ENCODE measurements at regions of chr7 and their contacts with region 1.

Region 1: DNA sequence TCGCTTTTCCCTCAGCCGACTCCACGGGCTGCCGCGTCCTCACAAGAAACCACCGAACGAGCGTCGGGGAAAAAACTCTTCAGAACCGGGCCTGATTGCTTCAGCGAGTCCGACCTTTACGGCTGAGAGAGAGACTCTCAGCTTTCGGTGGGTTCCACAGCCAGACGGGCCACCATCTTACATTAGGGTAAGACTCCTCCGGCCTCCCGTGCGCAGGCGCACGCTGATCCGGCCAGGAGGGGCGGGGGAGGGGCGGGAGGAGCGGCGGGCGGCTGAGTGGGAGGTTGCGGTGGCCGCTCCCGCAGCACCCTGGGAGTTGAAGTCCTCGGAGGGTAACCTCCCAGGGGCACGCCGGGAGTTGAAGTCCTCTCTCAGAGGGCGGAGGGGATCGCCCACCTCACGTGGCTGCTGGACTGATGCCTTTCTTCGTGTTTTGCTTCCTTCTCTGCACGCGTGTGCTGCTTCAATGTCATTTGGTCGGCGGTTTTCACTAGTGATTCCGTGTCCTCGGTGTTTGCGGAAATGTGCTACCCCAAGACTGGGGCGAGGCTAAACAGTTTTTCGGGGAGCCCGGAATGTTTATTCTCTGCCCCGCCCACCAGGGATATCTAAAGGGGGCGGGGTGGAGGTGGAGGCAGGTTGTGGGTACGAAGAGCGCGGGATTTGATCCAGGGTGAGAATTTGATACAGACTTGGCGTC is at the start of gene CNOT4:
- DNase-seq: peak; percentile 87 to 98
- ATAC-seq: peak; percentile 91 to 98 (median 94)
- H3K4me3 ChIP-seq: peak within 1 kb of the TSS; percentile 88
- H3K4me3 Mint-ChIP-seq: no peak within 1 kb of the TSS
- H3K27ac ChIP-seq: peak within 1 kb of the TSS; percentile 95
- H3K27ac Mint-ChIP-seq: no peak within 1 kb of the TSS
- H3K4me1 ChIP-seq: peaks cover 12% of the 10 kb centered on the region
- H3K4me1 Mint-ChIP-seq: peaks cover 6 to 8% of the 10 kb centered on the region in 2 donors
- H3K27me3 ChIP-seq: no peaks in the 10 kb centered on the region
- H3K27me3 Mint-ChIP-seq: no peaks in the 10 kb centered on the region
- CTCF ChIP-seq: no peak
- total RNA-seq, gene CNOT4: 40.6 to 47.1 (median 40.7) TPM

Region 2: DNA sequence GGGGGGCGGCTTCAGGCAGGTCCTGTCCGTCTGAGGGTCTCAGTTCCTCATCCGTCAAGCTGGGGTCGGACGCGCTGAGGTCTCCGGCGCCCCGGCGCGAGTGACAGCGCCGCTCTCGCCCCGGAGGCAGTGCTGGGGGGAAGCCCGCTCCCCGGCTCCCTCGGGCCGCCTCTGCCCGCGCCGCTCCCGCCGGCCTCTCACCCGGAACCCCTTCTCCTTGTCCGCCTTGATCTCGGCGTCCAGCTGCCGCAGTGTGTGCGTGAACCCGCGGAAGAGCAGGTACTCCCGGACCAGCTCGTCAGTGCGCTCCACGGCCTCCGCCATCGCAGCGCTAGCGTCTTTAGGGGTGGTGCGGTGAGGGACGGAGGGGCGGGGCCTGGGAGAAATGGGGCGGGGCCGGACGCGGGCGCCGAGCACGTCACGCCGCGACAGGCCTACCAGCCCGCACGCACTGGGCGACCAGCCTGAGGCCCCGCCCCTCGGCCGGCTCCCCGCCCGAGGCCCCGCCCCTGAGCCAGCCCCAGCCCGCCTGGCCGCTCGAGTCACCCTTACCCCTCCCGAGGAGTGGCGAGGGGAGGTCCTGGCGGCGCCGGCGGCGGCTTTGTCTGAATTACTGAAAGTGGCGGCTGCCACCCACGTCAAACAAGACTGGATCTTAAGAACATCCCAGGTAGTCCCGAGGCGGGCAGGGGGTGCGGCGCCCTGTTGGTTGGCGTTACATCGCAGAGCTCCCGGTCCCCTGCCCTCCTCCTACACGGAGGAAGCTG is 298.7 kb before region 1 on chr7 and contains the start of gene WDR91:
- intact Hi-C with region 1: loop called (anchors 5 kb)
- DNase-seq: peak; percentile 89 to 97
- ATAC-seq: peak; percentile 93 to 99 (median 94)
- H3K4me3 ChIP-seq: peak within 1 kb of the TSS; percentile 88
- H3K4me3 Mint-ChIP-seq: peak within 1 kb of the TSS; percentile 99
- H3K27ac ChIP-seq: peak within 1 kb of the TSS; percentile 87
- H3K27ac Mint-ChIP-seq: peak within 1 kb of the TSS; percentile 91 to 95
- H3K4me1 ChIP-seq: peaks cover 26% of the 10 kb centered on the region
- H3K4me1 Mint-ChIP-seq: peaks cover 17 to 35% of the 10 kb centered on the region in 2 donors
- H3K27me3 ChIP-seq: no peaks in the 10 kb centered on the region
- H3K27me3 Mint-ChIP-seq: peaks cover 0 to 3% of the 10 kb centered on the region in 2 donors
- CTCF ChIP-seq: no peak
- total RNA-seq, gene WDR91: 28.7 to 42.0 (median 39.2) TPM

Region 3: GRCh38 chr7:135662373-135663114 is 152.5 kb after region 1 on chr7 and contains the start of gene STMP1:
- intact Hi-C with region 1: loop called (anchors 5 kb)
- DNase-seq: peak; percentile 96 to 97
- ATAC-seq: peak; percentile 99
- H3K4me3 ChIP-seq: peak within 1 kb of the TSS; percentile 96
- H3K4me3 Mint-ChIP-seq: peak within 1 kb of the TSS; percentile 99
- H3K27ac ChIP-seq: peak within 1 kb of the TSS; percentile 63
- H3K27ac Mint-ChIP-seq: peak within 1 kb of the TSS; percentile 88 to 93
- H3K4me1 ChIP-seq: peaks cover 19% of the 10 kb centered on the region
- H3K4me1 Mint-ChIP-seq: peaks cover 18 to 28% of the 10 kb centered on the region in 2 donors
- H3K27me3 ChIP-seq: no peaks in the 10 kb centered on the region
- H3K27me3 Mint-ChIP-seq: no peaks in the 10 kb centered on the region
- CTCF ChIP-seq: peak; percentile 75
- total RNA-seq, gene STMP1: 19.4 to 25.8 (median 22.3) TPM